K562 (cell line): ENCODE measurements at regions of chr17 and their contacts with region 1.

Region 1: DNA sequence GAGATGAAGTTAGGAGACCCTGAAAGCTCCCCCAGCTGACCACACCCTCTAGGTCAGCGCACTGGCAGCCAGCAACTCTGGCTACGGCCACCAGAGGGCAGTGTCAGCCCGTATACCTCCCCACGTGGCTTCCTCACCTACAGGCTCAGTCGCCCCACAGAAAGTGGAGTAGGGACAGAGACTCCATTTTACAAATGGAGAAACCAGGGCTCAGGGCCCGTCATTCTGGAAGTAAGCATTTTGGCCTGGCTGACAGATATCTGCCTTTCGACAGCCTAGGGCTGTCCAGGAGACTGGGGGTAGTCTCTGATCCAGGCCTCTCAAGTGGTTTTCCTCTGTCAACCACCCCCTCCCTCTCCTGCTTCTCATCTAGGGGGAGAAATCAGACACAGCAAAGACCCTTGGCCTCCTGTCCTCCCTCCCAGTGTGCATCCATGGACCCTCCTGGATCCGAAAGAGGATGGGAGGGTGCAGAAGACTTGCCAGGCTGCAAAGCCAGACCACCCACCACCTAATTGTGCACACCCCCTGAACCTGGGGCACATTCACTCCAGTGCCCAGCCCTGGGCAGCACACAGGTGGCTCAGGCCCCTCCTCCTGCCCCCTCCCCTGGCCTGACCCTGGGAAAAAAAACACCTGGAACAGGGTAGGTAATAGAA is 3.8 kb upstream of the HAP1 start:
- DNase-seq: peak; percentile 91 to 93 (median 92)
- ATAC-seq: peak; percentile 97
- H3K4me3 ChIP-seq: no peak overlapping the region
- H3K27ac ChIP-seq: peak overlapping the region; percentile 60; the same call in 2 of the 3 replicates
- H3K4me1 ChIP-seq: peaks cover 4 to 25% of the 10 kb centered on the region in 2 experiments; a peak in 4 of 5 replicates
- H3K27me3 ChIP-seq: peaks cover 26 to 31% of the 10 kb centered on the region in 2 experiments
- CTCF ChIP-seq: peak; percentile 93 to 98 (median 97)
- EP300 ChIP-seq: no peak
- POLR2A ChIP-seq: no peak
- RAD21 ChIP-seq: peak; percentile 99 to 100

Region 2: DNA sequence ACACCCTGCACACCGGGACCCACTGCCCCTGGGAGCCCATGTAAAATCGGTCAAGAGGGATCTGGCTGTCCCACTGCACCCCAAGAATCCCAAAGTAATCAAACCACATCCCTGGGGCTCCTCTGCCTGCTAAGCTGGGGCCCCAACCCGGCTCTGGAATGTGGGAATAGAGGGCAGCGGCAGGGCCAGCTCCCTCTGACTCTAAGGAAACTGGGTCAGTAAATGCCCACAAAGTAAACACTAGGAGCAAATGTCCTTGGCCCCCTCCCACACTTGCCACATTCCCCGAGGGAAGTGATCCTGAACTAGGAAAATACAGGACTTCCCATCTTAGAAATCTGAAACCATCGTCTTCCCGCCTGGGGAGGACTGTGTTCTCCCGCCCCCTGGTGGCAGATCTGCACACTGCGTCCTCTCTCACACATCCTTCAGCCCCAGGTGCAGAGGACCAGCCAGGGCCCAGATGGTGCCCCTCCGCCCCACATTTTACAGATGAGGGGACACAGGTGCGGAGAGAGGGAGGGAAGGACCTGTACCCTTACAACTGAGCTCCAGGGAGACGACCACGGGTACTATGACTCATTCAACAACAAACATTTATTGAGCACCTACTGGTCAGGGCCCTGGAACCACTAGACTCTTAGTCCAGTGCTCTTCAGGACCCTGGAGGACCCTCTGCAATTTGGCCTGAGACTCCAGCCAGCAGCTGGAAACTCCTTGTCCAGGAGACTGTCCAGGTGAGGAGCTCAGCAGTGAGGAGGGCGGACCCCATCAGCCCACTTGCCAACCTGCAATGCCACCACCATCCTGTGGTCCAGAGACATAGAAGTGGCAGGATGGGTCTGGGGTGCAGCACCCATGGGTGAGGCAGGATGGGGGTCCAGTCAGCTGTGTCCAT is 63.4 kb after region 1 on chr17:
- CTCF ChIA-PET with region 1: interaction called, 48 read pairs
- POLR2A ChIA-PET with region 1: interaction called, 4 read pairs
- in situ Hi-C with region 1: loop called (anchors 5 kb)
- intact Hi-C with region 1: loop called (anchors 1 kb)
- DNase-seq: peak; percentile 79 to 86 (median 80)
- ATAC-seq: peak; percentile 87
- H3K4me3 ChIP-seq: no peak overlapping the region
- H3K27ac ChIP-seq: no peak overlapping the region
- H3K4me1 ChIP-seq: peaks cover 9 to 29% of the 10 kb centered on the region in 2 experiments
- H3K27me3 ChIP-seq: no peaks in the 10 kb centered on the region
- CTCF ChIP-seq: peak; percentile 92 to 97 (median 93)
- EP300 ChIP-seq: no peak
- POLR2A ChIP-seq: no peak
- RAD21 ChIP-seq: peak; percentile 92 to 99

Region 3: GRCh38 chr17:41885733-41886132 is 147.5 kb after region 1 on chr17:
- CTCF ChIA-PET with region 1: interaction called, 21 read pairs
- POLR2A ChIA-PET with region 1: no interaction called
- in situ Hi-C with region 1: no loop called
- intact Hi-C with region 1: loop called (anchors 5 kb)
- DNase-seq: peak in 3 of 4 experiments; percentile 30 to 38 (median 36)
- ATAC-seq: peak; percentile 61
- H3K4me3 ChIP-seq: no peak overlapping the region
- H3K27ac ChIP-seq: no peak overlapping the region
- H3K4me1 ChIP-seq: no peaks in the 10 kb centered on the region
- H3K27me3 ChIP-seq: no peaks in the 10 kb centered on the region
- CTCF ChIP-seq: peak; percentile 30 to 61 (median 46); a peak in 5 of 6 replicates
- EP300 ChIP-seq: no peak
- POLR2A ChIP-seq: no peak
- RAD21 ChIP-seq: peak; percentile 28 to 58

Region 4: DNA sequence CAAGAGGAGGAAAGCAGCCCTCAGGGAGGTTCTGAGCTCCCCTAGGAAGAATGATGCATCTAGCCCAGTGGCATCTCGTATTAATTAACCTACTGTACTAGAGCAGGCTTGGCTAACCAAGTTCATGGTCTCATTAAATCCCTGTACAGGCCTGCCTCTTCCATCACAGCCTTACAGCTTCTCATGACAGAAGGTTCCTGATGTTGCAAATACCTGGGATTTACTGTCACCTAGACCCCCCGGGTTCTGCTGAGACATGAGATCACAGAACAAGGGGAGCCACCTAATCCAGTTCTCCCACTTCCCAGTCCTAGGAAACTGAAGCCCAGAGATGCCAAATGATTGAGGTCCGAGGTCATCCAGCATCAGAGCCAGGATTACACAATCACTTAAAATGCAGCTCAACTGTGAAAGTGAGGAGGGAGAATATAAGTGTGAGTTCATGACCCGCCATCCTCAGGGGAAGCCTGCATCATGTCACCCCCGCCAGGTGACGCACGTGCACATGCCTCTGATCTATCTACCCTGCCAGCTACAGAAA is 156.7 kb after region 1 on chr17:
- CTCF ChIA-PET with region 1: interaction called, 4 read pairs
- POLR2A ChIA-PET with region 1: no interaction called
- in situ Hi-C with region 1: loop called (anchors 5 kb)
- intact Hi-C with region 1: no loop called
- DNase-seq: no peak
- ATAC-seq: no peak
- H3K4me3 ChIP-seq: no peak overlapping the region
- H3K27ac ChIP-seq: no peak overlapping the region
- H3K4me1 ChIP-seq: no peaks in the 10 kb centered on the region
- H3K27me3 ChIP-seq: no peaks in the 10 kb centered on the region
- CTCF ChIP-seq: no peak
- EP300 ChIP-seq: no peak
- POLR2A ChIP-seq: no peak
- RAD21 ChIP-seq: no peak

Region 5: DNA sequence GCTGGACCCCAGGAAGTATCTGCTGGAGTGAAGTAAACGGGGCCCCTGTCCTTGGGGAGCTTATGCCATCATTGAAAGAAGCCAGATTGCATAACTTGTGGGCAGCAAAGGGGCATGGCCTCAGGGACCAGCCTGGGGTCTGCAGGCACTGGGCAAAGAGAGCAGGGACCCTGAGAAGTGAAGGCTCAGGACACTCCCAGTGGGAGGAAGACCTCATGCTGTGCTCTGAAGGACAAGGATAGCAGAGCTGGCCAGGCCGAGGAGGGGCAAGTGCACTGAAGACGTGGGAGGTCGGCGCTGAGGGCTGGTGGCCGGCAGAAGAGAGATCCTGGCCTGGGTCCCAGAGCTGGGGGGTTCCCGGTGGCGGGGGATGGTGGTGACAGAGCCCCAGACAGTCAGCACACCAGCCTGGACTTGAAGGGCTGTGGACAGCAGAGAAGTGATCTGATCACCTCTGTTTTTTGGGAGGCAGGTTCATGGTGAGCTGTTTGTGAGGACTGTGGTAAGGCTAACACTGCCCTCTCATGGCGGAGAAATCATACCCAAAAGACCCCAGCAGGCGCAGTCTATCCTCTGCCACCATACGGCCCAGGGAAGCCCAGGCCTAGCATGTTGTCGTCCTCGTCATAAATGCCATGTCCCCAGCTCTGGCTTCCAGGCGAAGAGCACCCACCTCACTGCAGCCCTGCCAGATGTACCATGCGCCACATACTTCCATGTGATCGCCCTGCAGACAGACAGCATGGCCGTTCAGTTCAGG is 221.3 kb after region 1 on chr17:
- CTCF ChIA-PET with region 1: interaction called, 14 read pairs
- POLR2A ChIA-PET with region 1: no interaction called
- in situ Hi-C with region 1: loop called (anchors 5 kb)
- intact Hi-C with region 1: loop called (anchors 1 kb)
- DNase-seq: peak; percentile 58 to 80 (median 69)
- ATAC-seq: peak; percentile 88
- H3K4me3 ChIP-seq: no peak overlapping the region
- H3K27ac ChIP-seq: peak overlapping the region; percentile 28; the same call in 1 of the 3 replicates
- H3K4me1 ChIP-seq: peaks cover 23 to 29% of the 10 kb centered on the region in 2 experiments
- H3K27me3 ChIP-seq: no peaks in the 10 kb centered on the region
- CTCF ChIP-seq: peak; percentile 79 to 88 (median 83)
- EP300 ChIP-seq: no peak
- POLR2A ChIP-seq: no peak
- RAD21 ChIP-seq: peak; percentile 65 to 86

Region 6: DNA sequence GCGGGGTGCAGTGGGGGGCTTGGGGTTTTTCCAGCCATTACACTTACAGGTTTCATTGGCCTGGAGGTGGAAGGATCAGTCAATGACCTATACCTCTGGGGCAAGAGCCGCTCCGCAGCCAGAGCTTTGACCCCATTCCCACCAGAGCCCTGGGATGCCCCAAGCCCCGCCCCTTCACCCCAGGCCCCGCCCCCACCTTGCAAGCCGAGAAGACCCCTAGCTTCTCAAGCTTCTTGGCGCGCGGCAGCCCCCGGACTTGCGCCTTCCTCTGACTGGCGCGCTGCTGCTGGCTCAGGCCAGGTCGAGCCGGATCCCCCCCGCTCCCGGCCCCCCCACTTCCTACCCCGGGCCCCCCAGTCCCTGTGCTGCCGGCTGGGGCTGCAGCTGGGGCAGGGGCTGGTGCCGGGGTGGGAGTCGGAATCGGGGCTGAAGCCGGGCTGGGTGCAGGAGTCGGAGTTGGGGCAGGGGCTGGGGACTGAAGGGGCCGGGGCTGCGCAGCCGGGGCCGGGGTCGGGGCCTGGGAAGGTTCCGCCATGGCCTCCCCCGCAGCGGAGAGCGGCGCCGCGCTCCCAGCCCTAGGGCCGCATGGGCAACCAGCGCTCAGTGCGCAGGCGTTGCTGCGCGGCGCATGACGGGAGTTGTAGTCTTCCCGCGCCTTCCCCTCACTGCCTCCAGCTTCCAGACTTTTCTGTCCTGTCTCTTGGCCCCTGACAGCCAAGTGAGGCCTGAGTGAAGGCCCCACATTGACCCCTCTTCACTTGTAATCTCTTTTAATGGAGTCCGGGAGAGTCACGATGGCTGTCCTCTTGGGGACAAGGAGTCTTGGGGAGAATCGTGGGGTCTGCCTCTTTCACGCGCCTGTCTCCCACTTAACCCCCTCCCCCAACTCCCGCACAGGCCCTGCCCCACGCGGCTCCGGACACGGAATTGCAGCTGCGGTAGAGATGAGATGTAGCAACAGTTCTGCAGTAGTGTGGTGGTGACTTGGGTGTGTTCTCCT is 382.9 kb after region 1 on chr17 and contains the start of gene KAT2A:
- CTCF ChIA-PET with region 1: no interaction called
- POLR2A ChIA-PET with region 1: no interaction called
- in situ Hi-C with region 1: loop called (anchors 25 kb)
- intact Hi-C with region 1: no loop called
- DNase-seq: peak; percentile 92 to 95 (median 94)
- ATAC-seq: peak; percentile 97
- H3K4me3 ChIP-seq: peak within 1 kb of the TSS; percentile 66
- H3K27ac ChIP-seq: peak within 1 kb of the TSS; percentile 67
- H3K4me1 ChIP-seq: peaks cover 13 to 47% of the 10 kb centered on the region in 2 experiments
- H3K27me3 ChIP-seq: no peaks in the 10 kb centered on the region
- CTCF ChIP-seq: no peak
- EP300 ChIP-seq: no peak
- POLR2A ChIP-seq: peak; percentile 71
- RAD21 ChIP-seq: no peak
- polyA plus RNA-seq, gene KAT2A: 1.5 to 4.9 TPM

Region 7: GRCh38 chr17:42132941-42133340 is 394.7 kb after region 1 on chr17:
- CTCF ChIA-PET with region 1: no interaction called
- POLR2A ChIA-PET with region 1: no interaction called
- in situ Hi-C with region 1: no loop called
- intact Hi-C with region 1: no loop called
- DNase-seq: no peak
- ATAC-seq: no peak
- H3K4me3 ChIP-seq: no peak overlapping the region
- H3K27ac ChIP-seq: no peak overlapping the region
- H3K4me1 ChIP-seq: peaks cover 8 to 9% of the 10 kb centered on the region in 2 experiments; a peak in 3 of 5 replicates
- H3K27me3 ChIP-seq: no peaks in the 10 kb centered on the region
- CTCF ChIP-seq: no peak
- EP300 ChIP-seq: no peak
- POLR2A ChIP-seq: no peak
- RAD21 ChIP-seq: no peak